B cell (primary cell): ENCODE measurements at regions of chr6 and their contacts with region 1.

Region 1: GRCh38 chr6:14660806-14661579 is 543.4 kb downstream of the CD83 start:
- DNase-seq: peak; percentile 92
- ATAC-seq: peak; percentile 67
- H3K4me3 ChIP-seq: peak overlapping the region in 3 of 5 experiments; percentile 12 to 41 (median 20)
- H3K4me3 Mint-ChIP-seq: no peak overlapping the region
- H3K27ac ChIP-seq: peak overlapping the region; percentile 98
- H3K27ac Mint-ChIP-seq: no peak overlapping the region
- H3K4me1 ChIP-seq: peaks cover 94 to 96% of the 10 kb centered on the region in 2 donors
- H3K4me1 Mint-ChIP-seq: peaks cover 28% of the 10 kb centered on the region
- H3K27me3 ChIP-seq: no peaks in the 10 kb centered on the region
- H3K27me3 Mint-ChIP-seq: no peaks in the 10 kb centered on the region
- CTCF ChIP-seq: no peak

Region 2: DNA sequence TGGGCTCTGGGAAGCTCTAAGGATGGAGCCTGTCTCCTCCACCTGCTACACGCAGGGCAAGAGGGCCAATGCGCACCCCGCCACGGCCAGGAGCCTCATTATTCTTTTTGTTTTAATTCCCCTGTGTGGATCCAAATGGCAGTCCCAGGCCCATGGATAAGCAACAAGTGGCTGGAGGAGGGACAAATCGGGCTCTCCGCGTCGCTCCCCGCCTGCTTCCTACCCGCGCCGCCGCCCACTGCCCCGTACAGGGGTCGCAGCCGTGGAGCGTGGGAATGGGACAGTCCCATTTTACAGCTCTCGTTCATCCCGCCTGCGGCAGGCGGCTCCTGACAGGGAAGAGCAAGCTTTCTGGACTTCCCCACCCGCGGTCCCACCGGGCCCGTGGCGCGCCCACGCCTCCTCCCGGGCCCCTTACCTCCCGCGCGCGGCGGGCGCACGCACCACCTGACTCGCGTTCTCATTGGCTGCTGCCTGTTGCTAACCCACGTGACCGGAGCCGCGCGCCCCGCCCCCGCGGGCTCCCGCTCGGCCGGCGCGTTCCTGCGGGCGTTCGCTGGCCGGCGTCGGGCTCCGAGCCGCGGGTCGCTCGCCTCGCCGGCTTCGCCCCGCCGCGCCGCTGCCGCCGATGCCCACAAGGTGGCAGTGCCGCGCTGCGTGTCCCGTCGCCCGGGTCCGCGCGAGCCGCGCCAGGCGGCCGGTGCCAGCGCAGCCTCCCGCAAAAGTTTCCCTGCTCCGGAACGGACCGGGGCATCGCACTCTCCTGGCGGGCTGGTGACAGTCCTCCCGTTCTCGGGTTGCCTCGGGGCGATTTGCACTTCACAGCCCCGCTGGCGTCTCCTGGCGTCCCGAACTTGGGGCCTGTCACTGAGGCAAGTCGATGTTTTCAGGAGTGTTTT is 450.1 kb before region 1 on chr6:
- CTCF ChIA-PET with region 1: interaction called, 9 read pairs
- POLR2A ChIA-PET with region 1: no interaction called
- intact Hi-C with region 1: loop called (anchors 2 kb)
- DNase-seq: peak; percentile 96
- ATAC-seq: peak; percentile 91
- H3K4me3 ChIP-seq: peak overlapping the region; percentile 3 to 92 (median 82)
- H3K4me3 Mint-ChIP-seq: peak overlapping the region; percentile 90
- H3K27ac ChIP-seq: peak overlapping the region; percentile 92 to 97
- H3K27ac Mint-ChIP-seq: peak overlapping the region; percentile 97
- H3K4me1 ChIP-seq: peaks cover 30 to 33% of the 10 kb centered on the region in 2 donors
- H3K4me1 Mint-ChIP-seq: peaks cover 44% of the 10 kb centered on the region
- H3K27me3 ChIP-seq: no peaks in the 10 kb centered on the region
- H3K27me3 Mint-ChIP-seq: no peaks in the 10 kb centered on the region
- CTCF ChIP-seq: peak; percentile 72

Region 3: GRCh38 chr6:14584450-14584849 is 76.5 kb before region 1 on chr6:
- CTCF ChIA-PET with region 1: interaction called, 3 read pairs
- POLR2A ChIA-PET with region 1: no interaction called
- intact Hi-C with region 1: loop called (anchors 2 kb)
- DNase-seq: no peak
- ATAC-seq: no peak
- H3K4me3 ChIP-seq: no peak overlapping the region
- H3K4me3 Mint-ChIP-seq: no peak overlapping the region
- H3K27ac ChIP-seq: no peak overlapping the region
- H3K27ac Mint-ChIP-seq: no peak overlapping the region
- H3K4me1 ChIP-seq: peaks cover 7 to 10% of the 10 kb centered on the region in 2 donors
- H3K4me1 Mint-ChIP-seq: peaks cover 6% of the 10 kb centered on the region
- H3K27me3 ChIP-seq: no peaks in the 10 kb centered on the region
- H3K27me3 Mint-ChIP-seq: no peaks in the 10 kb centered on the region
- CTCF ChIP-seq: no peak

Region 4: GRCh38 chr6:14638906-14639761 is 21.9 kb before region 1 on chr6:
- CTCF ChIA-PET with region 1: interaction called, 22 read pairs
- POLR2A ChIA-PET with region 1: interaction called, 10 read pairs
- intact Hi-C with region 1: loop called (anchors 1 kb)
- DNase-seq: peak; percentile 79
- ATAC-seq: peak; percentile 60
- H3K4me3 ChIP-seq: peak overlapping the region; percentile 21 to 74 (median 25)
- H3K4me3 Mint-ChIP-seq: peak overlapping the region; percentile 85
- H3K27ac ChIP-seq: peak overlapping the region; percentile 94
- H3K27ac Mint-ChIP-seq: peak overlapping the region; percentile 98
- H3K4me1 ChIP-seq: peaks cover 77 to 81% of the 10 kb centered on the region in 2 donors
- H3K4me1 Mint-ChIP-seq: peaks cover 87% of the 10 kb centered on the region
- H3K27me3 ChIP-seq: no peaks in the 10 kb centered on the region
- H3K27me3 Mint-ChIP-seq: no peaks in the 10 kb centered on the region
- CTCF ChIP-seq: no peak

Region 5: GRCh38 chr6:14734416-14735340 is 73.7 kb after region 1 on chr6:
- CTCF ChIA-PET with region 1: interaction called, 5 read pairs
- POLR2A ChIA-PET with region 1: interaction called, 5 read pairs
- intact Hi-C with region 1: loop called (anchors 1 kb)
- DNase-seq: peak; percentile 89
- ATAC-seq: peak; percentile 83
- H3K4me3 ChIP-seq: peak overlapping the region in 2 of 5 experiments; percentile 11 to 46
- H3K4me3 Mint-ChIP-seq: peak overlapping the region; percentile 47
- H3K27ac ChIP-seq: peak overlapping the region; percentile 84 to 86
- H3K27ac Mint-ChIP-seq: peak overlapping the region; percentile 93
- H3K4me1 ChIP-seq: peaks cover 83 to 97% of the 10 kb centered on the region in 2 donors
- H3K4me1 Mint-ChIP-seq: peaks cover 95% of the 10 kb centered on the region
- H3K27me3 ChIP-seq: no peaks in the 10 kb centered on the region
- H3K27me3 Mint-ChIP-seq: no peaks in the 10 kb centered on the region
- CTCF ChIP-seq: no peak

Region 6: GRCh38 chr6:14910692-14911547 is 249.9 kb after region 1 on chr6:
- CTCF ChIA-PET with region 1: no interaction called
- POLR2A ChIA-PET with region 1: no interaction called
- intact Hi-C with region 1: loop called (anchors 2 kb)
- DNase-seq: peak; percentile 83
- ATAC-seq: peak; percentile 89
- H3K4me3 ChIP-seq: peak overlapping the region in 2 of 5 experiments; percentile 7 to 42
- H3K4me3 Mint-ChIP-seq: peak overlapping the region; percentile 78
- H3K27ac ChIP-seq: peak overlapping the region; percentile 67 to 84
- H3K27ac Mint-ChIP-seq: peak overlapping the region; percentile 87
- H3K4me1 ChIP-seq: peaks cover 33 to 36% of the 10 kb centered on the region in 2 donors
- H3K4me1 Mint-ChIP-seq: peaks cover 34% of the 10 kb centered on the region
- H3K27me3 ChIP-seq: no peaks in the 10 kb centered on the region
- H3K27me3 Mint-ChIP-seq: no peaks in the 10 kb centered on the region
- CTCF ChIP-seq: no peak